Activated CD4-positive, alpha-beta memory T cell treated with anti-CD3 and anti-CD28 coated beads for 36 hours (primary cell): ENCODE measurements at regions of chr4 and their contacts with region 1.

Region 1: DNA sequence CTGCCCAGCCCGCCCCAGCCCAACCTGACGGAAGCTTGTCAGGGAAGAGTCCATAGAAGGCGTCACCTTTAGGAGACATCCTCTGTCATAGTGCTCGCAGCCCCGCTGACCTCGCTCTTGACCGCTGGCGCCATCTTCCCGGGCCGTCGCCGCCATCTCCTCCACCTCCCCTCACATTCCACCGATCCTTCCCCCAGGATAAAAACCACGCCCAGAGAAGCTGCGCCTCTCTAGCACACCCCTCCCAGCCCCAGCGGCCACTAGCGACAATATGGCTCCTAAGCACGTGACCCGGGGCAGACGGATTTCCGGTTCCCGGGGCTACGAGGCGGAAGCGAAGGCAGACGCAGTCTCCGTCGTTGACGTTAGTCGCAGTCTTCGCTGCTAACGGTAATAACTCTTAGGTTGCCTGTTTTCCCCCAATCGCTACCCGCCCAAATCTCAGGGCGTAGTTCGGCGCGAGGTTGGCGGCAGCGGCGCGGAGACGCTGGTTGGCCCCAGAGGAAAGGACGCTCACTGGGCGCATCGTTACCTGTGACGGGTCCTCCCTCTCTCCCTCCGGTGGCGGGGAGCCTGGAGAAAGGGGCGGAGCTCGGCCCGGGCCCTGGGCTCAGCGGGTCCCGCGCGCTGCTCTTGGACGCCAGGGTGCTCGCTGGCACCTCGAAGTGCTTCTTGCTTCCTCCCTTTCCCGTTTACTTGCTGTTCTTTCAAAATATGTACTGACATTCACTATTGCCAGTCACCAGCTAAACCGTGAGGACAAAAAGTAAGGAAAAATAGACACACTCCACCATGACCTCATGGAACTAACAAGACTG is at the starts of genes RCHY1 and THAP6:
- DNase-seq: peak; percentile 95
- H3K4me3 Mint-ChIP-seq: no peak within 1 kb of the TSS
- H3K27ac Mint-ChIP-seq: peak within 1 kb of the TSS; percentile 98
- H3K4me1 Mint-ChIP-seq: peaks cover 52% of the 10 kb centered on the region
- H3K27me3 Mint-ChIP-seq: no peaks in the 10 kb centered on the region
- total RNA-seq, gene RCHY1: 30.0 to 32.4 TPM
- total RNA-seq, gene THAP6: 19.4 to 20.7 TPM

Region 2: GRCh38 chr4:75477201-75477600 is 37.1 kb before region 1 on chr4:
- CTCF ChIA-PET with region 1: no interaction called
- POLR2A ChIA-PET with region 1: no interaction called
- intact Hi-C with region 1: no loop called
- DNase-seq: no peak
- H3K4me3 Mint-ChIP-seq: no peak overlapping the region
- H3K27ac Mint-ChIP-seq: no peak overlapping the region
- H3K4me1 Mint-ChIP-seq: no peaks in the 10 kb centered on the region
- H3K27me3 Mint-ChIP-seq: no peaks in the 10 kb centered on the region

Region 3: DNA sequence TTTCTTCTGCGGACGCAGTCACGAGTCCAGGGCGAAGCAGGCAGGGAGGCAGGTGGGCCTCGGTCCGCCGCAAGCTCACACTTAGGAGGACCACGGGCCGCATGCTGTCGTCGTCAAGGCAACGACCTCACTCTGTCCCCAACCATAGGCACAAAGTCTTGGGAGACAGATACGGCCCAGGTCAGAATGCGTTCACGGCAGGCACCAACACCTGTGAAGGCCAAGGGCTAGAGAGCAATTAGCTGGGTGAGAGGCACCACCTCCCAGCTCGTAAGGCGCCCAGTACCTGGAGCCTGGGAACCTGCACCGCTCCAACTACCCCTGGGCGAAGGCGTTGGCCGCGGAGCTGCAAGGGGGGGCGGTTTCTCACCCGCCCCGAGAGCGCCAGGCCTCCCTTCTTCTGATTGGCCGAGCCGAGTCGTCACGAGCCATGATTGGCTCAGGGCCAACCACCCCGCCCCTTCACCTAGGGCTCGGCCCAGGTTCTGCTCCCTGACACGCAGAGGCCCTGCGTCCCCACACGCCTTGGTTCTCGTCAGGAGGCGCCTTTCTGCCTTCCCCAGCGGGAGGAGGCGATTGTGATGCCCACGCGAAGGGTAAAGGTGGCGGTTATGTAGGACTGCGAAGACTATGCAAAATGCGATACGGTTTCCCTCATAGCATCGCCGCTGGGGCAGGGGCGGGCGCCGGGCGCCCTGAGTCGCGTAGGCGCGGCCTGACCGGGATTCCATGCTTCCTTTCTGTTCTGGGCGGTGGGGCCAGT is 116.0 kb after region 1 on chr4 and contains the start of gene CDKL2:
- CTCF ChIA-PET with region 1: no interaction called
- POLR2A ChIA-PET with region 1: no interaction called
- intact Hi-C with region 1: loop called (anchors 1 kb)
- DNase-seq: peak; percentile 94
- H3K4me3 Mint-ChIP-seq: peak within 1 kb of the TSS; percentile 79
- H3K27ac Mint-ChIP-seq: peak within 1 kb of the TSS; percentile 46
- H3K4me1 Mint-ChIP-seq: peaks cover 6% of the 10 kb centered on the region
- H3K27me3 Mint-ChIP-seq: no peaks in the 10 kb centered on the region
- total RNA-seq, gene CDKL2: 0.97 to 1.1 TPM

Region 4: GRCh38 chr4:75940692-75941253 is 426.4 kb after region 1 on chr4 and contains the start of gene NAAA:
- CTCF ChIA-PET with region 1: interaction called, 4 read pairs
- POLR2A ChIA-PET with region 1: no interaction called
- intact Hi-C with region 1: loop called (anchors 2 kb)
- DNase-seq: peak; percentile 91
- H3K4me3 Mint-ChIP-seq: peak within 1 kb of the TSS; percentile 96
- H3K27ac Mint-ChIP-seq: peak within 1 kb of the TSS; percentile 93
- H3K4me1 Mint-ChIP-seq: peaks cover 20% of the 10 kb centered on the region
- H3K27me3 Mint-ChIP-seq: no peaks in the 10 kb centered on the region
- total RNA-seq, gene NAAA: 31.7 to 32.2 TPM

Region 5: GRCh38 chr4:76213415-76214176 is 699.3 kb after region 1 on chr4 and contains the start of gene SCARB2:
- CTCF ChIA-PET with region 1: no interaction called
- POLR2A ChIA-PET with region 1: no interaction called
- intact Hi-C with region 1: loop called (anchors 10 kb)
- DNase-seq: peak; percentile 75
- H3K4me3 Mint-ChIP-seq: peak within 1 kb of the TSS; percentile 70
- H3K27ac Mint-ChIP-seq: peak within 1 kb of the TSS; percentile 44
- H3K4me1 Mint-ChIP-seq: peaks cover 25% of the 10 kb centered on the region
- H3K27me3 Mint-ChIP-seq: no peaks in the 10 kb centered on the region
- total RNA-seq, gene SCARB2: 7.0 to 8.2 TPM